ENCODE measurements at regions of chr22 and their contacts with region 1.

Region 1: DNA sequence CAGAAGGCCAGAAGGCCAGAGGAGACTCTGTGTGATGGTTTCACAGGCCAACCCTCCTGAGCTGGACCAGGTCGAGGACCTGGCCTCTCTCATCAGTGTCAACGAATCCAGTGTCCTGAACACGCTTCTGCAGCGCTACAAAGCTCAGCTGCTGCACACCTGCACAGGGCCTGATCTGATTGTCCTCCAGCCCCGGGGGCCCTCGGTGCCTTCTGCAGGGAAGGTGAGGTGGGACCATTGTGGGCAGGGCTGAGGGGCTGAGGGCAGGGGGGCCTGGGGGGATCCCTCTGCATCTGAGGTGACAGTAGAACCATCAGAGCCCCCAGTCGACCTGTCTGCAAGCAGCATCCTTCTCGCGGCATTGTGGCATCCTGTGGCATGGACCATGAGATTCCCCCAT is 30.3 kb downstream of the MYO18B start:
- DNase-seq: no peak
- ATAC-seq: no peak
- H3K4me3 Mint-ChIP-seq: no peak overlapping the region
- H3K27ac Mint-ChIP-seq: peak overlapping the region; percentile 87
- H3K4me1 Mint-ChIP-seq: peaks cover 24% of the 10 kb centered on the region
- H3K27me3 Mint-ChIP-seq: no peaks in the 10 kb centered on the region

Region 2: DNA sequence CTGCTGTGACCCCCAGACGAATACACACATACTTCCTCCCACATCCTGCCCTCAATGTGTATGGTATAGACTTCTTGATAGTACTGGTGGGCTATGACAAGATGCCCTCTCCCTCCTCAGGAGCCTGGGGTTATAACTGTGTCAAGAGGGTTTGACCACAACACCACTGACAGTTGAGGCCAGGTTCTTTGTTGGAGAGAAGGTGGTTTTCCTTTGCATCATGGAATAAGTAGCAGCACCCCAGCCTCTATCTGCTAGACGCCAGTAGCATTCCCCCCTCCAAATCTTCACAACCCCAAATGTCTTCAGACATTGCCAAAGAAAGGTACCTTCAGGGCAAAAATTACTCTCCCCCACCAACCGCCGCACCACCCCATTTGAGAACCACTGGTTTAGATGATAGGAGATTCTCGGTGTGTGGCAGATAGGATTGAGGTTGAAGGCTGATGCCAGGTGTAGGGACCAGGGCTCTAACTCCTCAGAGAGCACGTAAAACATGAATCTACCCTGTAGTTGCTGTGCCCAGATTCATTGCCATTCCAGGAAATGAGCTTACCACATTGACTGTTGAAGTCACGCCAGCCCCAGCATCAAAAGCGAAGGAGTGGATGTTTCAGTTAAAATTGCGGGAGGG is 35.8 kb before region 1 on chr22:
- POLR2A ChIA-PET with region 1: interaction called, 10 read pairs
- DNase-seq: peak; percentile 73
- ATAC-seq: peak; percentile 88
- H3K4me3 Mint-ChIP-seq: peak overlapping the region; percentile 69
- H3K27ac Mint-ChIP-seq: peak overlapping the region; percentile 98
- H3K4me1 Mint-ChIP-seq: peaks cover 46% of the 10 kb centered on the region
- H3K27me3 Mint-ChIP-seq: no peaks in the 10 kb centered on the region

Measured in activated naive CD8-positive, alpha-beta T cell treated with anti-CD3 and anti-CD28 coated beads, Interleukin-2, amount 10 ng/mL, durations not matched to agents 7 days and 5 days (primary cell).